AG04449 (cell line): ENCODE measurements at regions of chr18 and their contacts with region 1.

Region 1: DNA sequence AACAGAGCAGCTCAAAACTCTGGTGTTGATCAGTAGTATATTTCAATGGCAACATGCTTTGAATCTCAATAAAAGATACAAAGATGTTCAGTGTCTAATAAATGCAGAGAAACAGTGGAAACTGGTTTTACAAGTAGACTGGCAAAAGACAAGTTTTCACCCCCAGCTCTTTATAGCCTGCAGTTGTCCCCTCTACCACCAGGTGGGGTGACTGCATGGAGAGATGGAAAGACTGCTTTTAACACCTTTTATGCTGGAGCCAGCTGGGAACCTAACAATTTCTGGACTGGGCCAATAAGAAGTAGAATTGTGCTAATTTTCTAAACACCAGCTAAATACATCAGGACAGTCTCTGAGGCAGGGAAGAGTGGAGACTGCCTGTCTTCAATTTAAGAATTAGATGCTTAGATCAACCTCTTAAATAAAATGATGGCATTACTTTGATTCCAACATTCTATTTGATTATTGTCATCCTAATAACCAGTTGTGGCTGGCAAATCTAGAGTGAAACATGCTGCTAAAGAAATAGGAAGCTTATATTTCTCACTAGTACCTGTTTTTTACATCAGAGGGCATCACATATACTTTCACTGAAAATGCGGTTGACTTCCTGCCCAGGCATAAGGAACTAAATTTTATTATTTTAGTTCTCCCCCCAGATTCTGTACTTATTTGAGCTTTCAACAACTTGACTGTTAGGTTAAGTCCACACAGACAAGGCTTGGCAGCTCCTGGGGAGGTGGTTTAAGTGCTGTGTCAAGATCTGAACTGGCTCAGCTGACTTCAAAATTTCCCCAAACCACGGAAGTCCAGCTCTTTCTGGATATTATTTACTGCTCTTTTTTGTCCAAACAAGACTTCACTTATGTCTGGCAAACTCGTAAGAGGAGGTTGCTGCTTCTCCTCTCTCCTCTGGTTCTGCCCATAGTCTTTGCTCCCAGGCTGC is 140.5 kb downstream of the TPGS2 start:
- DNase-seq: no peak
- H3K4me3 ChIP-seq: no peak overlapping the region
- CTCF ChIP-seq: peak; percentile 89

Region 2: DNA sequence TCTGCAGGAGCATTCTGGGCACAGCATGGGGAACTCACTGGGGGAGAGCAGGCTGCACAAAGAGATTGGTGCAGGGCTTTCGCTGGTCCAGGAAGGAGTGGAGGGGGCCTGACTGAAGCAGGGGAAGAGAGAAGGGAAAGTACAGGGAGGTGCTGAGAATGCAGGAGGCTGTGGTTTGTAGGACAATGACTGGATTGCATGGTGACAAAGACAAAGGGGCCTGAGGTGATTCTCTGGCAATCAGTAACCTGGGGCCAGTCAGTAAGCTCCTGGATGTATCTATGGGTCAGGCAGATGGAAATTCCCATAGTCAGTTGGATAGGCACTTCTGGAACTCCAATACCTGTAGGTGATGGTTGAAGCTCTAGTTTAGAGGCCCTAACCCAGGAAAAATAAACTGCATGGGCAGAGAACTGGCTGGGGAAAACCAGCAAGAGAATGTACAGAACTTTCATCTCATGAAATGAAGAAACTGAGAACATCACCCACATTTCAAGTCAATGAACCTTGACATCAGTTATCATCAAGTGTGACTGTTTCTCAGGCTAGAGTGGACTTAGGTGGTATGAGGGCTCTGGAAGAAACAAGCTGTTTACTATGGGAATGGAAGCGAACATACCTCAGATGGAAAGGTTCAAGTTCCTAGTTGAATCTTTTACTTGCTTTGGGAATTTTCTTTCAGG is 52.7 kb before region 1 on chr18:
- CTCF ChIA-PET with region 1: interaction called, 13 read pairs
- POLR2A ChIA-PET with region 1: no interaction called
- DNase-seq: no peak
- H3K4me3 ChIP-seq: no peak overlapping the region
- CTCF ChIP-seq: no peak

Region 3: DNA sequence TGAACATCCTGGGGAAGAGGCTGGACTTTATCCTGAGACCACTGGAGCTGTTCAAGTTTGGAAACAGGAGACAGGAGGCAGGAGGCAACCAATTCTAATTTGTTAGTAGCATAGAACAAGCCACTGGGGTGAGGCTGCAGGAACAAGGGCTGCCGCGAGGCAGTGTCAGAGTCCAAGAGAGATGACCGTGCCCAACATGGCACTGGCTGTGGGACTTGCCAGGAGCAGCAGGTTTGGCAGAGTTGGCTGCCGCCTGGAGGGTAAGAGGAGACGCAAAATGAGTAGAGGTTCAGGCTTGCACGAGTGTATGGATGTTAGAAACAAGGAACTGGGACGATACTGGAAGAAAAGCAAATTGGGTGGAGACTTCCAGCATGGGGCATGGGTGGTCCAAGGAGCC is 28.0 kb before region 1 on chr18:
- CTCF ChIA-PET with region 1: interaction called, 11 read pairs
- POLR2A ChIA-PET with region 1: no interaction called
- DNase-seq: no peak
- H3K4me3 ChIP-seq: no peak overlapping the region
- CTCF ChIP-seq: no peak

Region 4: DNA sequence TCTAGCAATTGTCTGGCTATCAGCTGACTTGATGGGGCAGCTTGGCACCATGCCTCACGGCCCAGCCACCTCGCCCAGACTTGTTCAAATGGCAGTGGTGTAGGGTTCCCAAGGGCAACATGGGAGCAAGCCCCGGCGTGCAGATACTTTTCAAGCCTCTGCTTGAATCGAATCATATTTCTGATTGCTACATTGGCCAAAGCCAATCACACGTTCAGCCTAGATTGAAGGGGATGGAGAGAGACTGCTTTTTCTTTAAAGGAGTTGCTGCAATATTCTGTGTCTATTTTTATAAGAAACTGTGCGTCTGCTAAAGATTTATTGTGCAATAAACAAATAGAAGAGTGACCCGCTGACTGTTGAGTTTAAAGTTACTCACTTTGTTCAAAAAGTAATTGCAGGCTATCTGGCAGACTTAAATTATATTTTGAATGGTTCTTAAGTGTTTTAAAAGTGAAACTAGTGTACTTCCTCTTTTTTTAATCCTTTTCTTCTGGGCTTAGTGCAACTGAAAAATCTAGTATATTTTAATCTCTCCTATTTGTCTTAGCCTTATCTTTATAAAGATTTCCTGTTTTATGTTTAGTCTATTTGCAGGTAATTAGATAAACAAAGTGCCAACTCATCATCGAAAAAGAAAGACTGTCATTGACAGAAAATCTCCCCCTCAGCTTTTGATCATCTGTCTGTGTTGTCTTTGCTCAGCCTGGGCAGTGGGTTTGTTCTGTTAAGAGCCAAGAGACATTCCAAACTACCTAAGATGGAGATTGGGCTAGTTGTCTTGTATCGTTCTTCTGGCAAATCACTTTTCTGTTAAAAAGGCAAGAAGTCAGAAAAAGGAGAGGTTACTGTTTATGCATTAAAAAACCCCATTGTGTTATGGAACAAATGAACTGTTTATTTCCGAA is 15.6 kb before region 1 on chr18:
- CTCF ChIA-PET with region 1: interaction called, 58 read pairs
- POLR2A ChIA-PET with region 1: no interaction called
- DNase-seq: no peak
- H3K4me3 ChIP-seq: no peak overlapping the region
- CTCF ChIP-seq: no peak

Region 5: DNA sequence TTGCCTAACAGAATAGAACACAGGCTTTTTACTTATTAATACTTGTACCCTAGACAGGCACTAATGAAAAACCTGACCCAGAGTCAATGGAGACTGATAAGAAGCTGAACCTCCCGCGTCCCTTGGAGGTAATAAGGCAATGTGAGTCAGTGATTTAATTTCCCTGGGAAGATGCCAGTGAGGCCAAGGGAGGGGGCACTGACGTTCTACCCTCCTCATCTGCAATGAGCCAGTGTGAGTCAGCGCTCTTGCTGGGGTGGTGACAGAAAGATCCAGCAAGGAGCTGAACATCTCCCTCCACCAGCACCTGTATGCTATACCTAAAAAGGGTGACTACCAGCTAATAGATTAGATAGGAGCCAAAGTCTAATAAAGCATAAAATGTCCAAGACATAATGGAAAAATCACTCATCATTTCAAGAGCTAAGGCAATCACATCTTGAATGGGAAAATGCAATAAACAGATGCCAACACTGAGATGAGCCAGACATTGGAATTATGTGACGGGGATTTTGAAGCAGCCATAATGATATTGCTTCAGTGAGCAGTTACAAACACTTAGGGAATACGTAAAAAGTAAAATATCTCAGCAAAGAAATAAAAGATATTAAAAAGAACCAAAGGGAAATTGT is 23.6 kb after region 1 on chr18:
- CTCF ChIA-PET with region 1: interaction called, 32 read pairs
- POLR2A ChIA-PET with region 1: interaction called, 6 read pairs
- DNase-seq: peak; percentile 50
- H3K4me3 ChIP-seq: no peak overlapping the region
- CTCF ChIP-seq: no peak

Region 6: DNA sequence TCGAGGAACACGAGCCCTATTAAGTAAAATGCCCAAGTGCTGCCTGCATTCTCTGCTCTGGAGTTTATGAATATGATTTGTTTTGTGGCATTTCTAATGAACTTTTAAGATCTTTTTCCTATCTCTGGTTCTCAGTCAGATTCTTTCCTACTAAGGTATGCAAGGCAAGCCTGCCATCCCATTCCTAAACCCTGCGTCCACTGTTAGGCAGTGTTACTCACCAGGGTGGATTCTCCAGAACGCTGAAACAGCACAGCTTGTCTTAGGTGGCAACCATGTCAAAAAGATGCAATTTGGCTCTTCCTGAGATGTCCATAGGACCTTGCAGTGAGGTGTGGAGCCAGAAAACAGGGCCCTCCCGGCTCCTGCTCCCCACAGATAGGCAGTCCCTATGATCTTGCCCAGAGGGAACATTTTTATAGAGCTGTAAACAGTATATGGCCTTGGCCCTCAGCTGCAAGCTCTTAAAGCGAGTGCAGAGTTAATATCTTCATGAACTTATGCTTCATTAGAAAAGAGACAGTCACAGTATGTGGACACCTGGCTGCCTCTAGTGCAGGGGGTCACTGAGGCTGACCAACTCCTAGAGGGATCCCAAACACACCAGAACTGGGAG is 56.1 kb after region 1 on chr18:
- CTCF ChIA-PET with region 1: interaction called, 27 read pairs
- POLR2A ChIA-PET with region 1: no interaction called
- DNase-seq: peak; percentile 45
- H3K4me3 ChIP-seq: no peak overlapping the region
- CTCF ChIP-seq: no peak

Region 7: DNA sequence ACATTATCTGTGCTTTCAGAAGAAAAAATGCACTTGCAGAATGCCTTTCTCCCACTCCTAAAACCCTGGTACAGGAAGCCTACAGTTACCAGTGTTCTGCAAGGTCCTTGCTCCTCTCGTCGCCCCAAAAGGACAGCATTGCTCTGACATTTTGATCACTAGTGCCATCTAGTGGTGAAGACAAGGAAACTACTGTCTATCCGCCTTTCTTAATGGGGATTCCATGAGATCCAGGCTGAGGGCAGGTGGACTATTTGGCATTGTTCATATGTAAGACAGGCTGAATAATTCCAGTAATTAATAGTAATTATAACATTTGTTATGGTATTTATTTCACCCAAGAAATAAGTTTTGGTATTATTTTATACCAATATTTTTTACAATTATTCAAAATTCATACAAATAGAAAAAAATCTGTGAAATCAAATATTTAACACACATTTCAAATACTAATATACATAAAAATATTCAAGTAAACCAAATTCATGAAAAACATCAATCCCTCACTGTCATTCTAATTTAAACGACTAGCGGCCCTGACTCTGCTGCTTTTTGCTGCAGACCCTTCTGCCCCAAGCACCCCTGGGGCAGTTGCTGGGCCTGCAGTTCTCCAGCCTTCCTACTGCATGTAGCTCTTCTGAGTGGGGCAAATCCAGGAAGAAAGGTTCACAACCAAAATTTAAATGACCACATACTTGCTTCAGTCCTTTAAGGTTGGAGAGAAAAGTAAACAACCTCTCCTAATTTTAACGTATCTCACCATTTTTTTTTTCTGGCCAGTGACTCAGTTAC is 121.5 kb after region 1 on chr18:
- CTCF ChIA-PET with region 1: interaction called, 35 read pairs
- POLR2A ChIA-PET with region 1: no interaction called
- DNase-seq: peak; percentile 29
- H3K4me3 ChIP-seq: no peak overlapping the region
- CTCF ChIP-seq: peak; percentile 73